ENCODE measurements at regions of chr5 and their contacts with region 1.

Region 1: GRCh38 chr5:173573126-173573960 is 43.1 kb downstream of the BOD1 start:
- DNase-seq: peak; percentile 89
- H3K4me3 ChIP-seq: peak overlapping the region; percentile 31 to 55; a peak in 3 of 4 replicates
- H3K27ac ChIP-seq: no peak overlapping the region
- H3K4me1 ChIP-seq: peaks cover 0 to 6% of the 10 kb centered on the region in 2 experiments; a peak in 1 of 4 replicates
- H3K27me3 ChIP-seq: no peaks in the 10 kb centered on the region
- CTCF ChIP-seq: peak; percentile 94
- EP300 ChIP-seq: 0 out of 4 replicates have a peak, but pooled peaks of 1 of the 2 experiments have one; percentile 15
- RAD21 ChIP-seq: peak; percentile 73

Region 2: GRCh38 chr5:173331956-173332479 is 241.3 kb before region 1 on chr5:
- CTCF ChIA-PET with region 1: interaction called, 13 read pairs
- POLR2A ChIA-PET with region 1: no interaction called
- DNase-seq: peak; percentile 91
- H3K4me3 ChIP-seq: peak overlapping the region in 1 of 2 experiments; percentile 30; a peak in 1 of 4 replicates
- H3K27ac ChIP-seq: no peak overlapping the region; a peak in 1 of 4 replicates
- H3K4me1 ChIP-seq: peaks cover 0 to 20% of the 10 kb centered on the region in 2 experiments; a peak in 1 of 4 replicates
- H3K27me3 ChIP-seq: no peaks in the 10 kb centered on the region
- CTCF ChIP-seq: peak; percentile 91
- EP300 ChIP-seq: no peak
- RAD21 ChIP-seq: peak; percentile 99

Region 3: GRCh38 chr5:173547579-173547978 is 25.8 kb before region 1 on chr5:
- CTCF ChIA-PET with region 1: interaction called, 29 read pairs
- POLR2A ChIA-PET with region 1: no interaction called
- DNase-seq: no peak
- H3K4me3 ChIP-seq: no peak overlapping the region
- H3K27ac ChIP-seq: no peak overlapping the region
- H3K4me1 ChIP-seq: no peaks in the 10 kb centered on the region
- H3K27me3 ChIP-seq: peaks cover 7% of the 10 kb centered on the region; the same call in 1 of the 2 replicates
- CTCF ChIP-seq: no peak
- EP300 ChIP-seq: no peak
- RAD21 ChIP-seq: no peak

Region 4: GRCh38 chr5:173554038-173554954 is 19.0 kb before region 1 on chr5:
- CTCF ChIA-PET with region 1: interaction called, 29 read pairs
- POLR2A ChIA-PET with region 1: no interaction called
- DNase-seq: no peak
- H3K4me3 ChIP-seq: no peak overlapping the region
- H3K27ac ChIP-seq: no peak overlapping the region
- H3K4me1 ChIP-seq: no peaks in the 10 kb centered on the region; a peak in 1 of 4 replicates
- H3K27me3 ChIP-seq: peaks cover 12% of the 10 kb centered on the region; the same call in 1 of the 2 replicates
- CTCF ChIP-seq: no peak
- EP300 ChIP-seq: no peak
- RAD21 ChIP-seq: no peak

Region 5: DNA sequence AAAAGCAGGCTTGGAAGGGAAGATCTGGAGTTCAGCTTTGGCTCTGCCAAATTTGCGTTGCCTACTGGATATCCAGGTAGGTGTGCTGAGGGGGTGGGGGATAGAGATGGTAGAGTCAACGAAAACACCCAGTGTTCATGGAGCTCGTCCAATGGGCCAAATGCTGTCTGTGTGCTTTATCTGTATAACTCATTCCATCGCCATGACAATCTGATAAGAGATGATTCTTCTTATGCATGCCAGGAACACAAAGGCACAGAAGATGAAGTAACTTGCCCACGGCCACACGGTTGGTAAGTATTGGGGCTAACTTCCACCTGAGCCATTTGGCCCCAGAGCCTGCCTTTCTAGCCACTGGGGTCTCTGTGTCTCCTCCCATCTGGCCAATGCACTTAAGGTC is 10.1 kb before region 1 on chr5:
- CTCF ChIA-PET with region 1: interaction called, 12 read pairs
- POLR2A ChIA-PET with region 1: no interaction called
- DNase-seq: no peak
- H3K4me3 ChIP-seq: no peak overlapping the region
- H3K27ac ChIP-seq: no peak overlapping the region
- H3K4me1 ChIP-seq: no peaks in the 10 kb centered on the region
- H3K27me3 ChIP-seq: peaks cover 13% of the 10 kb centered on the region; the same call in 1 of the 2 replicates
- CTCF ChIP-seq: no peak
- EP300 ChIP-seq: no peak
- RAD21 ChIP-seq: no peak

Region 6: GRCh38 chr5:173592050-173592669 is 18.8 kb after region 1 on chr5:
- CTCF ChIA-PET with region 1: interaction called, 23 read pairs
- POLR2A ChIA-PET with region 1: no interaction called
- DNase-seq: peak; percentile 35
- H3K4me3 ChIP-seq: no peak overlapping the region
- H3K27ac ChIP-seq: no peak overlapping the region
- H3K4me1 ChIP-seq: no peaks in the 10 kb centered on the region
- H3K27me3 ChIP-seq: no peaks in the 10 kb centered on the region
- CTCF ChIP-seq: peak; percentile 64
- EP300 ChIP-seq: no peak
- RAD21 ChIP-seq: no peak; the same call in 1 of the 2 replicates

Region 7: GRCh38 chr5:173598686-173599085 is 25.3 kb after region 1 on chr5:
- CTCF ChIA-PET with region 1: interaction called, 19 read pairs
- POLR2A ChIA-PET with region 1: no interaction called
- DNase-seq: no peak
- H3K4me3 ChIP-seq: no peak overlapping the region
- H3K27ac ChIP-seq: no peak overlapping the region
- H3K4me1 ChIP-seq: no peaks in the 10 kb centered on the region
- H3K27me3 ChIP-seq: no peaks in the 10 kb centered on the region
- CTCF ChIP-seq: no peak
- EP300 ChIP-seq: no peak
- RAD21 ChIP-seq: no peak

Region 8: GRCh38 chr5:173671121-173671949 is 98.0 kb after region 1 on chr5:
- CTCF ChIA-PET with region 1: no interaction called
- POLR2A ChIA-PET with region 1: no interaction called
- DNase-seq: no peak
- H3K4me3 ChIP-seq: no peak overlapping the region
- H3K27ac ChIP-seq: peak overlapping the region in 1 of 2 experiments; percentile 76; a peak in 2 of 4 replicates
- H3K4me1 ChIP-seq: peaks cover 6 to 16% of the 10 kb centered on the region in 2 experiments
- H3K27me3 ChIP-seq: no peaks in the 10 kb centered on the region
- CTCF ChIP-seq: no peak
- EP300 ChIP-seq: no peak
- RAD21 ChIP-seq: no peak

Measured in SK-N-SH (cell line).